CD8-positive, alpha-beta T cell (primary cell): ENCODE measurements at regions of chr9 and their contacts with region 1.

Region 1: DNA sequence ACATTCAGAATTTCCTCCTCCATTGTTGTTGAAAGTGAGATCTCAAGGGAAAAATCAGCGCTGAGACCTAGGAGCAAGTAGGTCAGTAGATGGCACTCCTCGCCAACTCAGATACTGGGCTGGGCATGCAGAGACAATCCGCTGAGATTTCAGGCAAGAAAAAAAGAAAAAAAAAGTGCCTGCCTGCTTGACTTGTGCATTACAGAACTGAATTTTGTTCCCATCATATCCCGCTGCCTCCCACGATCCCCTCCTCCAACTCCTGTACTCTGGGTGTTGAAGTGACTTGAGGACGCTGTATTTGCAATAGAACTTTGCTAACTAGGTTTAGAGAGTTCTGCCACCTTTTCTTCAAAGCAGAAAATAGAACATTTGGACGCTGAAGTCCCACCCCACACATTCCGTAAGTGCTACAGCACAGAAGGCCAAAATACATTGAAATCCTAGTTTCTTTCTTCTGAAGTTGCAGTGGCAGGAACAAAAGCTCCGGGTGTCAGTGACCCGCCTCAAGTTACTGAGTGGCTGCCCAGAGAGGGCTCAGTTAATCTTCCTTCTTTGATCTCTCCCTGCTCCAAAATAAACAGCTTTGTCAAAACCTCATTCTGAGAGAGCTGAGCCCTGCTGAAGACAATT is 265.8 kb downstream of the MLLT3 start:
- DNase-seq: peak; percentile 6 to 69 (median 42)
- ATAC-seq: peak; percentile 75
- H3K4me3 ChIP-seq: no peak overlapping the region
- H3K4me3 Mint-ChIP-seq: no peak overlapping the region
- H3K27ac ChIP-seq: no peak overlapping the region
- H3K27ac Mint-ChIP-seq: no peak overlapping the region
- H3K4me1 ChIP-seq: peaks cover 7% of the 10 kb centered on the region
- H3K4me1 Mint-ChIP-seq: peaks cover 38% of the 10 kb centered on the region
- H3K27me3 ChIP-seq: no peaks in the 10 kb centered on the region
- H3K27me3 Mint-ChIP-seq: no peaks in the 10 kb centered on the region
- CTCF ChIP-seq: peak; percentile 59

Region 2: GRCh38 chr9:20307621-20308020 is 48.9 kb before region 1 on chr9:
- CTCF ChIA-PET with region 1: no interaction called
- POLR2A ChIA-PET with region 1: no interaction called
- intact Hi-C with region 1: loop called in 1 of 2 experiments (anchors 5 kb)
- DNase-seq: no peak
- ATAC-seq: no peak
- H3K4me3 ChIP-seq: no peak overlapping the region
- H3K4me3 Mint-ChIP-seq: no peak overlapping the region
- H3K27ac ChIP-seq: no peak overlapping the region
- H3K27ac Mint-ChIP-seq: no peak overlapping the region
- H3K4me1 ChIP-seq: no peaks in the 10 kb centered on the region
- H3K4me1 Mint-ChIP-seq: peaks cover 2% of the 10 kb centered on the region
- H3K27me3 ChIP-seq: no peaks in the 10 kb centered on the region
- H3K27me3 Mint-ChIP-seq: no peaks in the 10 kb centered on the region
- CTCF ChIP-seq: no peak